ENCODE measurements at regions of chr17 and their contacts with region 1.

Region 1: DNA sequence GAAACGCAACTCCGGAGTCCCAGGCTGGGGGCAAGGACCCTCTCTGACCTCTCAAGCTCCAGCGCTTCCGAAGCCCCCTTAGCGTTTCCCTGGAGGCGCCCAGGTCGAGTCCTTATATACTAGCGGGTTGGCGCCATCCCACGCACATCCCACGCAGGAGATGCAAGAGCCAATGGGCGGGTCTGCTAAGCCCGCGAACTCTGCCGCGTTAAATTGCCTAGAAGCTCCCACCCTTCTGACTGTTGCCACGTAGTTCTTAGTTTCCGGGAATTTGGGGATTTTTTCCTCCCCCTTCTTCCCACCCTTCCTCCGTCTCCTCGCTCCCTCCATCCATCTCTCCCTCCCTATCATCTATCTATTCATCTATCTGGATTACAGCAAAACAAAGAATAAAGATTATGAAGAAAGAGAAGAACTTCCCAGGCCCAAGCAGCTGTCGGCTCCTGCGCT is at the start of gene SLFN11:
- DNase-seq: peak; percentile 49 to 94 (median 80)
- ATAC-seq: peak; percentile 92
- H3K4me3 ChIP-seq: peak within 1 kb of the TSS; percentile 92
- H3K4me3 Mint-ChIP-seq: peak within 1 kb of the TSS; percentile 94 to 99 (median 98)
- H3K27ac ChIP-seq: peak within 1 kb of the TSS; percentile 99
- H3K27ac Mint-ChIP-seq: peak within 1 kb of the TSS; percentile 92 to 99 (median 99)
- H3K4me1 ChIP-seq: peaks cover 2 to 13% of the 10 kb centered on the region in 2 donors
- H3K4me1 Mint-ChIP-seq: peaks cover 23 to 74% (median 54%) of the 10 kb centered on the region in 7 donors
- H3K27me3 ChIP-seq: no peaks in the 10 kb centered on the region
- H3K27me3 Mint-ChIP-seq: peaks cover 0 to 8% (median 0%) of the 10 kb centered on the region in 5 donors
- total RNA-seq, gene SLFN11: 13.8 to 71.9 (median 29.7) TPM

Region 2: GRCh38 chr17:35161281-35161761 is 212.2 kb before region 1 on chr17:
- CTCF ChIA-PET with region 1: no interaction called
- POLR2A ChIA-PET with region 1: no interaction called
- intact Hi-C with region 1: loop called in 1 of 2 experiments (anchors 5 kb)
- DNase-seq: peak in 7 of 9 donors; percentile 31 to 68 (median 55)
- ATAC-seq: peak; percentile 77
- H3K4me3 ChIP-seq: peak overlapping the region; percentile 30
- H3K4me3 Mint-ChIP-seq: peak overlapping the region; percentile 41 to 83 (median 72)
- H3K27ac ChIP-seq: peak overlapping the region; percentile 75
- H3K27ac Mint-ChIP-seq: peak overlapping the region; percentile 65 to 96 (median 90)
- H3K4me1 ChIP-seq: peaks cover 40 to 52% of the 10 kb centered on the region in 2 donors
- H3K4me1 Mint-ChIP-seq: peaks cover 34 to 76% (median 70%) of the 10 kb centered on the region in 7 donors
- H3K27me3 ChIP-seq: no peaks in the 10 kb centered on the region
- H3K27me3 Mint-ChIP-seq: peaks cover 0 to 11% (median 0%) of the 10 kb centered on the region in 5 donors

Region 3: DNA sequence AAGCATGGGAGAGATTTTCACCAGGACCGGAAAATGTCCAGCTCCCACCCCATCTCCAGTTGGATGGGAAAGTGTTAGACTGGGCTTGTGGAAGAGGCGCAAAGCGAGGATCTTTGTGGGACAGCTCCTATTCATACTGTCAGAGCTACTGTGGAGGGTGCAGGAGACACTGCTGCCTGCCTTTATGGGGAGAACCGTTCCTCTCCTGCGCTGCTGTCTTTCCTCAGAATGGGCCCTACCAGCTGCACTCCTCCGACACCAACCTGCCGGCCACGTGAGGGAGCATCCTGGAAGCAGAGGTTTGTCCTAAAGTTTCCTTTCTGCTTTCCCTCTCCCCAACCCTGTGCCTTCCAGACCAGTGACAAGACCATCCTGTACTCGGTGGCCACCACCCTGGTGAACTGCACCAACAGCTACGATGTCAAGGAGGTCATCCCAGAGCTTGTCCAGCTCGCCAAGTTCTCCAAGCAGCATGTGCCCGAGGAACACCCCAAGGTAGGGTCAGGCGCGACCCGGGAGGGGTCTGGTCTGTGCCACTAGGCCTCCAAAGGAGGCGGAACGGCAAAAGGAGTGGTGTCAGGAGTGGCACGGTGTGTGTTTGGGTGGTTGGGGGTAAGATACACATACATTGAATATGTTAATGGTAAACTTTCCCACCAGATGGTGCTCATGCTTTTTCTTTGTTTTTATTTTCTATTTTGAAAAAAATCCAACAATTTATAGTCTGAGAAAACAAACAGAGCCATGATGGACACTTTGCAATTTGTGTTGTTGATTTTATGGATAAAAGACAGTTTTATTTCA is 202.4 kb before region 1 on chr17:
- CTCF ChIA-PET with region 1: no interaction called
- POLR2A ChIA-PET with region 1: no interaction called
- intact Hi-C with region 1: loop called in 1 of 2 experiments (anchors 5 kb)
- DNase-seq: peak in 7 of 9 donors; percentile 35 to 77 (median 70)
- ATAC-seq: peak; percentile 86
- H3K4me3 ChIP-seq: peak overlapping the region; percentile 25
- H3K4me3 Mint-ChIP-seq: peak overlapping the region in 8 of 10 donors; percentile 46 to 79 (median 70)
- H3K27ac ChIP-seq: peak overlapping the region; percentile 47
- H3K27ac Mint-ChIP-seq: peak overlapping the region; percentile 65 to 96 (median 89)
- H3K4me1 ChIP-seq: peaks cover 16 to 20% of the 10 kb centered on the region in 2 donors
- H3K4me1 Mint-ChIP-seq: peaks cover 24 to 59% (median 44%) of the 10 kb centered on the region in 7 donors
- H3K27me3 ChIP-seq: no peaks in the 10 kb centered on the region
- H3K27me3 Mint-ChIP-seq: no peaks in the 10 kb centered on the region

Region 4: GRCh38 chr17:35345926-35346771 is 27.4 kb before region 1 on chr17:
- CTCF ChIA-PET with region 1: no interaction called
- POLR2A ChIA-PET with region 1: no interaction called
- intact Hi-C with region 1: loop called in 1 of 2 experiments (anchors 2 kb)
- DNase-seq: peak in 7 of 9 donors; percentile 17 to 38 (median 23)
- ATAC-seq: peak; percentile 77
- H3K4me3 ChIP-seq: peak overlapping the region; percentile 65
- H3K4me3 Mint-ChIP-seq: peak overlapping the region; percentile 91 to 98 (median 93)
- H3K27ac ChIP-seq: peak overlapping the region; percentile 34
- H3K27ac Mint-ChIP-seq: peak overlapping the region; percentile 47 to 89 (median 82)
- H3K4me1 ChIP-seq: peaks cover 13 to 29% of the 10 kb centered on the region in 2 donors
- H3K4me1 Mint-ChIP-seq: peaks cover 33 to 58% (median 40%) of the 10 kb centered on the region in 7 donors
- H3K27me3 ChIP-seq: no peaks in the 10 kb centered on the region
- H3K27me3 Mint-ChIP-seq: peaks cover 0 to 33% (median 0%) of the 10 kb centered on the region in 5 donors

Region 5: GRCh38 chr17:35407531-35407930 is 34.0 kb after region 1 on chr17:
- CTCF ChIA-PET with region 1: no interaction called
- POLR2A ChIA-PET with region 1: no interaction called
- intact Hi-C with region 1: no loop called
- DNase-seq: no peak
- ATAC-seq: no peak
- H3K4me3 ChIP-seq: no peak overlapping the region
- H3K4me3 Mint-ChIP-seq: no peak overlapping the region
- H3K27ac ChIP-seq: no peak overlapping the region
- H3K27ac Mint-ChIP-seq: no peak overlapping the region
- H3K4me1 ChIP-seq: peaks cover 3 to 6% of the 10 kb centered on the region in 2 donors
- H3K4me1 Mint-ChIP-seq: peaks cover 0 to 6% (median 0%) of the 10 kb centered on the region in 7 donors
- H3K27me3 ChIP-seq: no peaks in the 10 kb centered on the region
- H3K27me3 Mint-ChIP-seq: no peaks in the 10 kb centered on the region

Region 6: DNA sequence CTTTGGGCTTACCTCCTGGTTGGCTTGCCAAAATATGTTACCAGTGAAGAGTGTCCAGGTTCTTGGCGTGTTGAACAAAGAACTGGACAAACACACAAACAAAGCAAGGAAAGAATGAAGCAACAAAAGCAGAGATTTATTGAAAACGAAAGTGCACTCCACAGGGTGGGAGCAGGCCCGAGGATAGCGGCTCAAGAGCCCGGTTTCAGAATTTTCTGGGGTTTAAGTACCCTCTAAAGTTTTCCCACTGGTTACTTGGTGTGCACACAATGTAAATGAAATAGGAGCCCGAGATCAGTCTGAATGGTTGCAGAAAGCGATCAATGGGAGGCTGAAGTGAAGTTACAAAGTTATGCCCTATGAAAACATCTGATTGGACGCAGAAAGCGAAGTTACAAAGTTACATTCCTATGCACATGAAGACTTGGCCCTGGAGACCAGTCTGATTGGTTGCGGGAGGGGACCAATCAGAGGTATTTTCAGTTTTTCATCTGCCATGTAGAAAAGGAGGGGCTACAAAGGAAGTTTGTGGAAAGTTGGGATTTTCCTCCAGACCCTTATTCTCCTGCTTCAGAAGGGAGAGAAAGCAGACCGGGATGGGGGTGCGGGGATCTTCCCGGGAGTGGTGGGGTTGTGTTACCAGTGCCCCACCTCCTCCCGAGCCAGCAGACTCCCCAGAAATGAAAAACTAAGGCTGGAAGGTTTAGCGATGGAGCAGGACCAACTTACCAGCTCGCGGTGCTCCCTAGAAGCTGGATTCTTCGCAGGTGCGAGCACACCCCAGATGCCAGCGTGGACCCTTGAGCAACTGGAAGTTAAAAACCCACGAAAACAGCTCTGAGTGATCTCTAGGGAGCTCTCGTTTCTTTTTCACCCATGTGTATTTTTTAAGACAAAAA is 58.9 kb after region 1 on chr17 and contains the start of gene SLFN12:
- CTCF ChIA-PET with region 1: no interaction called
- POLR2A ChIA-PET with region 1: interaction called, 7 read pairs
- intact Hi-C with region 1: loop called (anchors 1 to 2 kb)
- DNase-seq: peak in 8 of 9 donors; percentile 31 to 75 (median 70)
- ATAC-seq: peak; percentile 95
- H3K4me3 ChIP-seq: peak within 1 kb of the TSS; percentile 70
- H3K4me3 Mint-ChIP-seq: peak within 1 kb of the TSS; percentile 86 to 100 (median 96)
- H3K27ac ChIP-seq: peak within 1 kb of the TSS; percentile 63
- H3K27ac Mint-ChIP-seq: peak within 1 kb of the TSS; percentile 82 to 94 (median 91)
- H3K4me1 ChIP-seq: peaks cover 16 to 28% of the 10 kb centered on the region in 2 donors
- H3K4me1 Mint-ChIP-seq: peaks cover 36 to 65% (median 59%) of the 10 kb centered on the region in 7 donors
- H3K27me3 ChIP-seq: no peaks in the 10 kb centered on the region
- H3K27me3 Mint-ChIP-seq: no peaks in the 10 kb centered on the region
- total RNA-seq, gene SLFN12: 4.2 to 14.9 (median 6.5) TPM

Region 7: GRCh38 chr17:35448214-35448898 is 74.8 kb after region 1 on chr17 and contains the start of gene SLFN13:
- CTCF ChIA-PET with region 1: no interaction called
- POLR2A ChIA-PET with region 1: interaction called, 12 read pairs
- intact Hi-C with region 1: loop called (anchors 1 to 2 kb)
- DNase-seq: peak; percentile 59 to 89 (median 74)
- ATAC-seq: peak; percentile 94
- H3K4me3 ChIP-seq: peak within 1 kb of the TSS; percentile 57
- H3K4me3 Mint-ChIP-seq: peak within 1 kb of the TSS; percentile 75 to 94 (median 87)
- H3K27ac ChIP-seq: peak within 1 kb of the TSS; percentile 69
- H3K27ac Mint-ChIP-seq: peak within 1 kb of the TSS; percentile 76 to 94 (median 83)
- H3K4me1 ChIP-seq: peaks cover 7 to 14% of the 10 kb centered on the region in 2 donors
- H3K4me1 Mint-ChIP-seq: peaks cover 0 to 33% (median 26%) of the 10 kb centered on the region in 7 donors
- H3K27me3 ChIP-seq: no peaks in the 10 kb centered on the region
- H3K27me3 Mint-ChIP-seq: no peaks in the 10 kb centered on the region
- total RNA-seq, gene SLFN13: 10.5 to 64.7 (median 21.0) TPM

Measured in naive thymus-derived CD4-positive, alpha-beta T cell (primary cell).